ENCODE measurements at regions of chr5 and their contacts with region 1.

Region 1: GRCh38 chr5:68456756-68457217 is 241.2 kb downstream of the PIK3R1 start:
- DNase-seq: no peak
- H3K4me3 ChIP-seq: no peak overlapping the region
- CTCF ChIP-seq: no peak
- POLR2A ChIP-seq: no peak

Region 2: DNA sequence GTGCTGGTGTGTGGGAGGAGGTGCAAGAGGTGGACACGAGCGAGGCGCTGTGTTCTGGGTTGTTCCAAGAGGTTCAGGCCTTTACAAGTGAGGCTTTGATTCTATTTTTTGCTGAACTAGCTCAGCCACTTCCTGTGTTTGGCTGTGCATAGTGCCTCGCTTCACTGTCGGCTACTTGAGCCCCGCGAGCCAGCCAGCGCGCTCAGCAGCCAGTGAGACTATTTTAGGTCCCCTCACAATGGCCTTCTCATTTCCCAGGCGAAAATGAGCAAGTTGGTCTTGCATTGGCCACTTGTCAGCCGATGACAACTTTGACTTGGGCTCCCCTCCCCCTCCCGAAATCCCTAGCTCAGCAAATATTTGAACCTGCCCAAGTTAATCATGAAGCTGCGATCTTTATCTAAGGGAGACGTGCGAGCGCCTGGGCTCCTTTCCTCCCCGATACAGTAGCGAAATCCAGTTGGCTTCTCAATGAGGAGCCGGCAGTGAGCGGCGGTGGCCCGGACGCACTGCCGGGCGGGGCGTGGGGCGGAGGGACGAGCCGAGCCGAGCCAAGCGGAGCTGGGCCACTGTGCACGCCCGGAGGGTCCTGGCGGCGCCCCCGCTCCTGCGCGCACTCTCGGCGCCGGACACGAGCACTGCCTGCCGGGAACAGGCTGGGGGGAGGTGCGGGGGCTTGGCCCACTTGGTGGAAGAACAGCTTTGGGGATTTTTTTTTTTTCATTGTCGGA is 168.6 kb before region 1 on chr5:
- intact Hi-C with region 1: loop called (anchors 10 kb)
- DNase-seq: peak; percentile 48 to 91
- H3K4me3 ChIP-seq: peak overlapping the region; percentile 39
- CTCF ChIP-seq: no peak
- POLR2A ChIP-seq: no peak

Region 3: DNA sequence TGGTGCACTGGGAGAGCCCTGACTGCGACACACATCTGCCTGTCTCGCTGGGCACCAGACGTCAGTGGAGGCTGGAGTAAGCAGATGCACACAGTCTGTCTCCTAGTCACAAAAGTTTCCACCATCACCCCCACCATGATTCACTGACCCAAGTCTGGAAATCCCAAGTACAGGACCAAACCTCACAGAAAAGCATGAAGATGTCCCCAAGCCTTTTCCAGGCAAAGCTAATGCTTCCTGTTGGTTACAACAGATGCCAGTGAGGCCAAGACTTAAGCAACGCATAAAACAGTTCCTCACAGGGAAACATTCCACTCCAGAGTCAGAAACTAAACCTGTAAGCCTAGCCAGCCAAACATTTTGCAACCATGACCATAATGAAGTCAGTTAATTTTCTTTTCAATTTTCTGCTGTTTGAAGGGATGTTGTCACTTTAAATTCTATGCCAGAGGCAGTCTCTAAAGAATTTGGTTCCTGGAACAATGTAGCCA is 377.7 kb after region 1 on chr5:
- intact Hi-C with region 1: loop called (anchors 5 kb)
- DNase-seq: peak in 1 of 2 donors; percentile 56
- H3K4me3 ChIP-seq: no peak overlapping the region
- CTCF ChIP-seq: no peak
- POLR2A ChIP-seq: no peak

Region 4: DNA sequence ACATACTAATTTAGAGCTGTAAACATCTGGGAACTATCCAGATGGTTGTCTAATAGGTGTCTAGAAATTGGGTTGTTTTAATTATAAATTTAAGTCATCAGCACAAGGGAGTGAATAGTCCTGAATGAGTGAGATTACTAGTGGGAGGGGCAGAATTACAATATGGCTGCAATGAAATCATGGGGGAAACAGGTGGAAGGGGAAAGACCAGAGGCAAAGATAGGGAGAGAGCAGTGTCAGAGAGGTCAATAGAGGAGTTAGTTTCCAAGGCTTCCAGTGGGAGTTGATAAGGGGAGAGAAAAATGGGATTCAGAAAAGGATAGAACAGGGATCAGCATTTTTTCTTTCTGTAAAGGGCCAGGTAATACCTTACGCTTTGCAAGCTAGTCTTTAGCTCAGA is 903.7 kb after region 1 on chr5:
- intact Hi-C with region 1: no loop called
- DNase-seq: no peak
- H3K4me3 ChIP-seq: no peak overlapping the region
- CTCF ChIP-seq: no peak
- POLR2A ChIP-seq: no peak

Measured in lower leg skin (tissue), 4 donors.